ENCODE measurements at regions of chr12 and their contacts with region 1.

Region 1: DNA sequence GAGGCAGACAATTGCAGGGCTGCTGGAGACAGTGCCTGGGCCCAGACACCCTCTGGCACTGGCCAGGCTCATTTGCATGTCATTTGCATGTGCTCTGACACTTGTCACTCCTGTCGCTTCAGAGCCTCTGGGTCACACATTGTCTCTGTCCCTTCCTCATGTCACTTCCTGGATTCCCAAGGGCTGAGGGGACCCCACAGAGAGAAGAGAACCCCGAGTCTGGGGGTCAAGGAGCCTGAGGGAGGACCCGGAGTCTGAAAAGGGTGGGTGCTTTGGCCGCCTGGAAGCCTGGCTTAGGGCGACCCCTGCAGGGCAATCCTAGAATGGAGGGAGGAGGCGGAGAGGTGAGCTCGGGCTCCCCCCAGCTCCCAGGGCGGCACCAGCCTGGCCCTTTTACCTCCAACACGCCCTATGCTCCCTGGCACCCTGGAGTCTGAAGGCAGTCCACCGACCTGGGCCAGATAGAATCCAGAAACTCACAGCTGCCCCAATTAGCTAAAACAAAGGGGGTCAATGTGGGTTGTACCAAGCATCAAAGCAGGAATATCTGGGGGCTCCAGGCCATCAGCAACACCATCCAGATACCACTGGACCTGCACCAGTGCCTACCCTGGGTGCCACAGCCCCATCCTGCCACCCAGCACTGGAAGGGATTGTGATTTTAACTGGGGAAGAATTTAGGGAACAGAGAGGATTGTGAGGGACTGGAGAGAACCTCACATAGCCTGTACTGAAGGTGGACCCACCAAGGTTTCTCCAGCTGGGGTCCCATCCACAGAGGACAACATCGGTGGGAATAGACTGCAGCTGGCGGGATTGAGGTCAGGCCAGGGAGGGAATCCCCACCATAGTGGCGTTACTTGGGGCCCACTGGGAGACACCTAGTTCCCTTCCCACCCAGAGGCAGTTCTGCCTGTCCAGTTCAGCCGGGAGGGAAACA is 21.8 kb upstream of the KRT78 start:
- DNase-seq: peak; percentile 38 to 86 (median 76)
- ATAC-seq: peak; percentile 57 to 76 (median 66)
- H3K4me3 ChIP-seq: no peak overlapping the region
- H3K4me3 Mint-ChIP-seq: no peak overlapping the region
- H3K27ac ChIP-seq: no peak overlapping the region
- H3K27ac Mint-ChIP-seq: peak overlapping the region in 1 of 2 donors; percentile 16
- H3K4me1 ChIP-seq: peaks cover 3 to 52% of the 10 kb centered on the region in 2 experiments
- H3K4me1 Mint-ChIP-seq: peaks cover 41 to 52% (median 49%) of the 10 kb centered on the region in 3 donors
- H3K27me3 ChIP-seq: peaks cover 0 to 21% of the 10 kb centered on the region in 2 experiments
- H3K27me3 Mint-ChIP-seq: no peaks in the 10 kb centered on the region

Region 2: DNA sequence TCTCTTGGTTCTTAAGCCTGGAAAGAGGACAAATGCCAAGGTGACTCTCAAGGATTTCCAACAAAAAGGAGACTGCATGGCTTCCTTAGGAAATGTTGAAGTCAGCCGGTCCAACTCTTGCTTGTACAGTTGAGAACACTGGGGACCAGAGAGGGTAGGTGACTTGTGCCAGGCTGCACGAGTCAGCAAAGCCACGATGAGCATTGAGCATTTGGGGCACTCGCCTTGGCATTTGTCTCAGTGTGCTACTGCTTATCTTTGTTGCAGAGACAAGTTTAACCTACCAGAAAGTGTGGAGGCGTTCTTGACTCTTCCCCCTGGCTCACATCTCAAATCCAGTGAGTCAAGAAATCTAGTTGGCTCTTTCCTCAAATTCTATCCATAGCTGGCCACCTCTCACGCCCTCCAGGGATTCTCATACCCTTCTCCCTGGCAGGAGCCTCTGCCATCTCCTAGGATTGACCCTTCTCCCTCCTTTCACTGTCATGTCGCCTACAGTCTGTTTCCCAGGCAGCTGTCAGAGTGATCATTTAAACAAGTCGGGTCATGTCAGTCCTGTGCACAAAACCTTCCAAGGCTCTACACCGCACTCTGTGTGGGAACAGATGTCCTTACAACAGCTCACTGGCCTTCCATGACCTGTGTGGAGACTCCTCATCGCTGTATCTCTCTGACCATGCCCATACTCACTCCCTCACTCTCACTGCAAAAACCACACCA is 532.2 kb before region 1 on chr12:
- CTCF ChIA-PET with region 1: no interaction called
- POLR2A ChIA-PET with region 1: no interaction called
- DNase-seq: no peak
- ATAC-seq: no peak
- H3K4me3 ChIP-seq: no peak overlapping the region
- H3K4me3 Mint-ChIP-seq: no peak overlapping the region
- H3K27ac ChIP-seq: no peak overlapping the region
- H3K27ac Mint-ChIP-seq: no peak overlapping the region
- H3K4me1 ChIP-seq: no peaks in the 10 kb centered on the region
- H3K4me1 Mint-ChIP-seq: no peaks in the 10 kb centered on the region
- H3K27me3 ChIP-seq: peaks cover 0 to 17% of the 10 kb centered on the region in 2 experiments
- H3K27me3 Mint-ChIP-seq: peaks cover 11 to 15% of the 10 kb centered on the region in 2 donors

Region 3: DNA sequence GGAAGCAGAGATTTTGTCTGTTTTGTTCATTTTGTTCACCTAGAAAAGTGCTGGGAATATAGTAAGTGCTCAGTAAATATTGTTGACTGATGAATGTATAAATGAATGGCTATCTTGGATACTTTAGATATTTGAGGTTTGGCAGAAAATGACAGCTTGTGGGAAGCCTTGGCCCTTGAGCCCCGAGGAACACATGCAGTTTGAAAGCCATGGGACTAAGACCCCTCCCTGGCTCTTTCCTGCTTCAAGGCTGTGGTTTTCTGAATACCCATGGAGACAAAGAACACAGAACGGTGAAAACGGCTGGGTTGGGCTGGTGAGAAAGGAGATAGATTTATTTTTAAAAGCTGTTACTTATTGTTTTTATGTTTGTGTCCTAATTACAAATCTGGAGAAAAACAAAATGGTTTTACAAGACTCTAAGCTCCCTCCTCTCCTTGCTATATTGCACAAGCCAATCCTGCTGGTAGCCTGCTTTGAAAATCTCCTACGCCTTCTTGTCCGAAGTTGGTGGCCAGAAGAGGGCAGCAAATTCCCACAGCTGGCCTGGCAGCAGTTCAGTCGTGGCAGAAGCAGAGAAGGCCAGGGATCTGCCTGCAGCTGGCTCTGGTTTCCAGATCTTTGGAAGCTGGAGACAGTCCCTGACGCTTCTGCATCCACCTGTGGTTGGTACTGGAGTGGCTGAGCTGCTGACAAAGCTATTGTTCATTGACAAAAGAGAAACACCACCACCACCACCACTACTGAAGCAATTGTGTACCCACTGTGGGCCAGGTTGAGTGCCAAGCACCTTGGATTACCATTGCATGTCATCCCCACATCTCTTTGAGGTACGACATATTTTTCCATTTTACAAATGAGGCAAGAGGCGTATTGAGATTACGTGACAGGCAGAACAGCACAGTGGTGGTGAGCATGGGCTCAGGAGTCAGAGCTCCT is 498.1 kb before region 1 on chr12:
- CTCF ChIA-PET with region 1: interaction called in 1 of 2 experiments, 12 read pairs
- POLR2A ChIA-PET with region 1: no interaction called
- DNase-seq: peak in 30 of 35 experiments; percentile 17 to 72 (median 40)
- ATAC-seq: peak in 3 of 4 experiments; percentile 32 to 52 (median 36)
- H3K4me3 ChIP-seq: no peak overlapping the region
- H3K4me3 Mint-ChIP-seq: no peak overlapping the region
- H3K27ac ChIP-seq: no peak overlapping the region
- H3K27ac Mint-ChIP-seq: no peak overlapping the region
- H3K4me1 ChIP-seq: no peaks in the 10 kb centered on the region
- H3K4me1 Mint-ChIP-seq: no peaks in the 10 kb centered on the region
- H3K27me3 ChIP-seq: peaks cover 0 to 40% of the 10 kb centered on the region in 2 experiments
- H3K27me3 Mint-ChIP-seq: peaks cover 28 to 29% of the 10 kb centered on the region in 2 donors

Region 4: GRCh38 chr12:52582971-52583456 is 287.6 kb before region 1 on chr12:
- CTCF ChIA-PET with region 1: interaction called, 24 to 37 read pairs
- POLR2A ChIA-PET with region 1: interaction called in 1 of 2 experiments, 5 read pairs
- DNase-seq: peak; percentile 29 to 82 (median 64)
- ATAC-seq: peak; percentile 16 to 56 (median 46)
- H3K4me3 ChIP-seq: no peak overlapping the region
- H3K4me3 Mint-ChIP-seq: no peak overlapping the region
- H3K27ac ChIP-seq: no peak overlapping the region
- H3K27ac Mint-ChIP-seq: peak overlapping the region; percentile 62 to 74
- H3K4me1 ChIP-seq: peaks cover 32 to 50% of the 10 kb centered on the region in 2 experiments
- H3K4me1 Mint-ChIP-seq: peaks cover 61 to 67% (median 66%) of the 10 kb centered on the region in 3 donors
- H3K27me3 ChIP-seq: peaks cover 0 to 9% of the 10 kb centered on the region in 2 experiments
- H3K27me3 Mint-ChIP-seq: peaks cover 0 to 3% of the 10 kb centered on the region in 2 donors

Region 5: DNA sequence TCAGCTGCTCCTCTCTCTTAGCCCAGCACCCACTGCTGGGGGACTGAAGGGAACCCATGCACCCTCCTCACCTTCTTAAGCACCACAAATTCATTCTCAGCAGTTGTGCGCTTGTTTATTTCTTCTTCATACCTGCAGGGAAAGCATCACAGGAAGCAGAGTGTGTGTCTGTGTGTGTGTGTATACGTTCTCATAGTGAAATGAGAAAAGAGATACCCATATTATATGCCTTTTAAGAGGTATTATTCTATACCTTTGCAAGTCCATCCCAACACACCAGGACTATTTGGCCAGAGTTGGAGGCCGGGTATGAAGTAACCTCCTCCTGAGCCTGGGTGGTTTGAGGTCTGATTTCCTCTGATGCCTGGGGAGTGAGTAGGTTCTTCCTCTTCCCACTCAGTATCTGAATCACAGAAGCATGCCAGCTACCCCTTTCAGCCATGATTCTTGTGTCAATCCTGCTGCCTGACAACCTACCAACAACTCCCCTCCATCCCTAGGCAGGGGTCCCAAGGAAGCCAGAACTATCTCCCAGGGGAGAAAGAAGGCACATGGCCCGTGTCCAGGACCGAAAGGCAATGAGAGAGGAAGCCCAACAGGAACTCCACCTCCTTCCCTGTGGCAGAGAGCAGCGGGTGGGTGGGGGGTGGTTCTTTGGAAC is 255.3 kb before region 1 on chr12:
- CTCF ChIA-PET with region 1: interaction called in 1 of 2 experiments, 10 read pairs
- POLR2A ChIA-PET with region 1: interaction called in 1 of 2 experiments, 3 read pairs
- DNase-seq: peak in 10 of 35 experiments; percentile 10 to 58 (median 30)
- ATAC-seq: peak; percentile 29 to 42 (median 38)
- H3K4me3 ChIP-seq: peak overlapping the region in 1 of 2 donors; percentile 2
- H3K4me3 Mint-ChIP-seq: peak overlapping the region; percentile 1 to 67 (median 62)
- H3K27ac ChIP-seq: peak overlapping the region; percentile 70
- H3K27ac Mint-ChIP-seq: peak overlapping the region; percentile 89 to 99
- H3K4me1 ChIP-seq: peaks cover 70 to 85% of the 10 kb centered on the region in 2 experiments
- H3K4me1 Mint-ChIP-seq: peaks cover 78 to 95% (median 82%) of the 10 kb centered on the region in 3 donors
- H3K27me3 ChIP-seq: no peaks in the 10 kb centered on the region
- H3K27me3 Mint-ChIP-seq: peaks cover 0 to 4% of the 10 kb centered on the region in 2 donors

Region 6: GRCh38 chr12:52884526-52885293 is 14.1 kb after region 1 on chr12:
- CTCF ChIA-PET with region 1: interaction called, 5 to 15 read pairs
- POLR2A ChIA-PET with region 1: no interaction called
- DNase-seq: peak; percentile 49 to 83 (median 74)
- ATAC-seq: peak; percentile 73 to 83 (median 80)
- H3K4me3 ChIP-seq: no peak overlapping the region
- H3K4me3 Mint-ChIP-seq: no peak overlapping the region
- H3K27ac ChIP-seq: no peak overlapping the region
- H3K27ac Mint-ChIP-seq: no peak overlapping the region
- H3K4me1 ChIP-seq: peaks cover 0 to 6% of the 10 kb centered on the region in 2 experiments
- H3K4me1 Mint-ChIP-seq: peaks cover 7 to 10% (median 7%) of the 10 kb centered on the region in 3 donors
- H3K27me3 ChIP-seq: peaks cover 0 to 43% of the 10 kb centered on the region in 2 experiments
- H3K27me3 Mint-ChIP-seq: peaks cover 10 to 16% of the 10 kb centered on the region in 2 donors

Region 7: DNA sequence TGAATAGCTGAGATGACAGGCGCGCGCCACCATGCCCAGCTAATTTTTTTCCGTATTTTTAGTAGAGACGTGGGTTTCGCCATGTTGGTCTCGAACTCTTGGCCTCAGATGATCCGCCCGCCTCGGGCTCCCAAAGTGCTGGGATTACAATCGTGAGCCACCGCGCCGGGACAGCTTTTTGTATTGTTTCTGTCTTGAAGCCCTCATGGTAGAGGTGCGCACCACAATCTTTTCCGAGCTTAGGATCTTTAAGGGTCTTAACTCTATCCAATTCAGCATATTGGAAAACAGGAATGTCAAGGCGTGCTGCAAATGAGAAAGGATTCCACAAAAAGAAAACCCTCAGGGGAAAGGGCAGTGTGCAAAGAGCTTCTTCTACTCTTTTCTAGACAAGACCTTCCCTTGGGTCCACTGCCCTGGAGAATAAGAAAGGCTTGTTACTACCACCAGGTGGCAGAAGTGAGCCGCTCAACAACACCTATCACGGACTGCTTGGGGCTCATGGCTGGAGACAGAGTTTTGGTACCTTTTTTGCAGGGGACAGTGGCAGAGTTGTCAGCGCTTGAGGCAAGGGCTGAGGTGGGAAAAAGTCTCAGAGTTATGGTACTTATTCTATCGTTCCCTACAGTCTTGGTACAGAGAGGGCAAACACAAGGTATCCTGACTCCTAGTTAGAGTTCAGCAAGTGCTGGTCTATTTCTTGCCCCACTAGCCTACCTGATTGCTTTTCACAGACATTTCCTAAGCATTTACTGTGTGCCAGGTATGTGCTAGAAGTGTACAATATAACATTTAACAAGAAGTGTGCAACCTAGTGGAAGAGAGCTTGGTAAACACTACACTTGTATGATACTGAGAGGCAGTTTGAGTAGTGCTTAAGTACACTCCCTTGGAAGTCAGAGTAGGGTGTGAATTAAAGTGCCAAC is 482.0 kb after region 1 on chr12:
- CTCF ChIA-PET with region 1: no interaction called
- POLR2A ChIA-PET with region 1: no interaction called
- DNase-seq: peak; percentile 60 to 95 (median 78)
- ATAC-seq: peak; percentile 95 to 99 (median 98)
- H3K4me3 ChIP-seq: no peak overlapping the region
- H3K4me3 Mint-ChIP-seq: no peak overlapping the region
- H3K27ac ChIP-seq: no peak overlapping the region
- H3K27ac Mint-ChIP-seq: peak overlapping the region in 1 of 2 donors; percentile 47
- H3K4me1 ChIP-seq: peaks cover 0 to 6% of the 10 kb centered on the region in 2 experiments
- H3K4me1 Mint-ChIP-seq: peaks cover 6 to 7% (median 6%) of the 10 kb centered on the region in 3 donors
- H3K27me3 ChIP-seq: no peaks in the 10 kb centered on the region
- H3K27me3 Mint-ChIP-seq: no peaks in the 10 kb centered on the region

Measured in T-cell (primary cell).